ENCODE measurements at regions of chr9 and their contacts with region 1.

Region 1: GRCh38 chr9:129610473-129611301 is 10.2 kb downstream of the C9orf50 start:
- DNase-seq: peak; percentile 62
- H3K4me3 ChIP-seq: peak overlapping the region; percentile 64 to 69
- H3K27ac ChIP-seq: peak overlapping the region; percentile 89 to 94
- H3K4me1 ChIP-seq: peaks cover 6% of the 10 kb centered on the region
- H3K27me3 ChIP-seq: no peaks in the 10 kb centered on the region
- CTCF ChIP-seq: peak; percentile 93 to 100 (median 98)
- POLR2A ChIP-seq: peak; percentile 20

Region 2: GRCh38 chr9:129139993-129140396 is 470.7 kb before region 1 on chr9:
- intact Hi-C with region 1: loop called (anchors 1 kb)
- DNase-seq: peak; percentile 94
- H3K4me3 ChIP-seq: peak overlapping the region; percentile 30 to 39
- H3K27ac ChIP-seq: peak overlapping the region; percentile 99
- H3K4me1 ChIP-seq: peaks cover 36% of the 10 kb centered on the region
- H3K27me3 ChIP-seq: no peaks in the 10 kb centered on the region
- CTCF ChIP-seq: peak in 2 of 4 experiments; percentile 20 to 27
- POLR2A ChIP-seq: peak; percentile 85

Region 3: DNA sequence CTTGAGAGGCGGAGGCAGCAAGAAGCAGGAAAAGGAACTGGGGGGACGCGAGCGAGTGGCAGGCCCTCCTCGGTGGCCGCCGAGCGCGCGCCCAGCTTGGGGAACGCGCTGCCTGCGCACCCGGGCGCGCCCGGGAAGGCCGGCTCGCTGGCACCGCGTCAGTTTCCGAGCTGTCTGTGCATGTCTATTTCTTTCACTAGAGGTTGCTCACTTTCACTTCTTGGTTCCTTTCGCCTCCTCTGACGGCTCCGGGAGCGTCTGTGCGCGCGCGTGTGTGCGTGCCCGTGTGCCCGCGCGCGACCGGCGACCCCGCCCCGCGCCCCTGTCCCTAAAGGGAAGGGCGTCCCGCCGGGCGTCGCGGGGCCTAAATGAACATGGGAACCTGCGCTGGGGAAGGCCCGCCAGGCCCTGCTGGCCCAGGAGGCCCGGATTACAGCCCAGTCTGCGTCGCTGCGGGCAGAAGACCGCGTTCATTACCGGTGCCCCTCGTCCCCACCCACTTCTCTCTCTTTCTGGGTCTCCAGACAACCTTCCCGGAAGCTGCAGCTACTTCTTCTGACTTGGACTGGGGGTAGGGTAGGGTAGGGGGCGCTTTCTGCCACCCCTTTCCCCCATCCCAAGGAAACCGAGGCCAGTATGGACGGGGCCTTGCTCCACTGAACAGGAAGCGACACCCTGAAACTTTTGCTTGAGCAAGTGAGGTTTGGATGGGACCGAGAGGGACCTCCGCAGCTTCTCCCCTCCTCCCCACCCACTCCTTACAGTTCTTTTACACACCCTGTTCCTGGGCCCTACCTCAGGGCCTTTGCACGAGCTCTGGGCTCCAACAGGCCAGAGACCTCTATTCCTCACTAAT is 226.9 kb before region 1 on chr9:
- intact Hi-C with region 1: loop called (anchors 10 kb)
- DNase-seq: peak; percentile 88
- H3K4me3 ChIP-seq: peak overlapping the region; percentile 41 to 45
- H3K27ac ChIP-seq: peak overlapping the region; percentile 97 to 99
- H3K4me1 ChIP-seq: peaks cover 7% of the 10 kb centered on the region
- H3K27me3 ChIP-seq: no peaks in the 10 kb centered on the region
- CTCF ChIP-seq: peak in 3 of 4 experiments; percentile 26 to 51 (median 37)
- POLR2A ChIP-seq: peak; percentile 52

Measured in prostate gland (tissue), 2 donors.